WTC11 (cell line): ENCODE measurements at regions of chr9 and their contacts with region 1.

Region 1: DNA sequence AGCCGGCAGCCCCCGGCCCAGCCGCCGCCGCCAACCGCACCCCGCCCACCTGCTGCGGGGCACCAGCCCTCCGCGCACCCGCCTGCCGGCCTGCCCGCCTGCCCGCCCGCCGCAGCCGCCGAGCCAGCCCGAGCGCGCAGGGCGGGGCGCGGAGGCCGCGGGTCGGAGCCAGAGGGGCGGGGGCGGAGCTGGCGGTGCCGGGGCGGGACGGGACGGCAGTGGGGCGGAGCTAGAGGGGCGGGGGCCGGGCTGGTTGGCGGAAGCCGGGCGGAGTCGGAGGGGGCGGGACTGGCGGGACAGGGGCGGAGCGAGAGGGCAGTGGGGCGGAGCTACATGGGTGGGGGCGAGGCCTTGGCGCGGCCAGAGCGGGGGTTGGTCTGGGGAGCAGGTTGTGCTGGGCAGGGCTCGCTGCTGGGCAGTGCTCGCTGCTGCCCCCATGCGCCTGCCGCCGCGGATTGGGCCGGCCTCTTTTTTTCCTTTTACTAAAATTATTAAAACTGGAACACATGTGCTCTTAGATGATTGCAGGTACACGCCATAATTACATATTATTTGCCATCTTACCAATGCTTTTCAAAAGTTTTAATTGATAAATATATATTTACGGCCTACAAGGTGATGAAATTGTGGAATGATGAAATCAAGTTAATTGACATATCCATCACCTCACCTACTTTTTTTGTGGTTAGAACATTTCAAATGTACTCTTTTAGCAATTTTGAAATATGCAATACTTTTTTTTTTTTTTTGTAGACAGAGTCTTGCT is at the start of gene SH3GLB2:
- DNase-seq: peak; percentile 96
- ATAC-seq: peak; percentile 94
- H3K4me3 Mint-ChIP-seq: peak within 1 kb of the TSS; percentile 83
- H3K27ac Mint-ChIP-seq: peak within 1 kb of the TSS; percentile 84
- H3K4me1 Mint-ChIP-seq: peaks cover 23% of the 10 kb centered on the region
- H3K27me3 Mint-ChIP-seq: no peaks in the 10 kb centered on the region
- CTCF ChIP-seq: peak; percentile 52
- total RNA-seq, gene SH3GLB2: 59.7 to 65.7 TPM (median 62.9 TPM) in 3 replicates

Region 2: DNA sequence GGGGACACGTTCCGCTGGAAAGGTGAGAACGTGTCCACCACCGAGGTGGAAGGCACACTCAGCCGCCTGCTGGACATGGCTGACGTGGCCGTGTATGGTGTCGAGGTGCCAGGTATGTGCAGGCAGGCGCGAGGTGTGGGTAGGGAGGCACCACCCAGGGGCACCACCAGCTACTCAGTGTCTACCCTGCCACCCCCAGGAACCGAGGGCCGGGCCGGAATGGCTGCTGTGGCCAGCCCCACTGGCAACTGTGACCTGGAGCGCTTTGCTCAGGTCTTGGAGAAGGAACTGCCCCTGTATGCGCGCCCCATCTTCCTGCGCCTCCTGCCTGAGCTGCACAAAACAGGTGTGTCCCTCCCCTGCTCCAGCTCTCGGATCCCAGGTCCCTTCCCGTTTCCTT is 672.9 kb before region 1 on chr9:
- CTCF ChIA-PET with region 1: no interaction called
- POLR2A ChIA-PET with region 1: no interaction called
- DNase-seq: no peak
- ATAC-seq: no peak
- H3K4me3 Mint-ChIP-seq: no peak overlapping the region
- H3K27ac Mint-ChIP-seq: no peak overlapping the region
- H3K4me1 Mint-ChIP-seq: no peaks in the 10 kb centered on the region
- H3K27me3 Mint-ChIP-seq: no peaks in the 10 kb centered on the region
- CTCF ChIP-seq: no peak

Region 3: GRCh38 chr9:128818099-128818838 is 210.1 kb before region 1 on chr9 and contains the start of gene ENDOG:
- CTCF ChIA-PET with region 1: interaction called, 13 read pairs
- POLR2A ChIA-PET with region 1: interaction called, 3 read pairs
- DNase-seq: peak; percentile 99
- ATAC-seq: peak; percentile 86
- H3K4me3 Mint-ChIP-seq: peak within 1 kb of the TSS; percentile 71
- H3K27ac Mint-ChIP-seq: peak within 1 kb of the TSS; percentile 80; the same call in 1 of the 2 replicates
- H3K4me1 Mint-ChIP-seq: peaks cover 3% of the 10 kb centered on the region
- H3K27me3 Mint-ChIP-seq: no peaks in the 10 kb centered on the region
- CTCF ChIP-seq: peak; percentile 53; the same call in 1 of the 2 replicates
- total RNA-seq, gene ENDOG: 25.8 to 28.7 TPM (median 25.8 TPM) in 3 replicates

Region 4: DNA sequence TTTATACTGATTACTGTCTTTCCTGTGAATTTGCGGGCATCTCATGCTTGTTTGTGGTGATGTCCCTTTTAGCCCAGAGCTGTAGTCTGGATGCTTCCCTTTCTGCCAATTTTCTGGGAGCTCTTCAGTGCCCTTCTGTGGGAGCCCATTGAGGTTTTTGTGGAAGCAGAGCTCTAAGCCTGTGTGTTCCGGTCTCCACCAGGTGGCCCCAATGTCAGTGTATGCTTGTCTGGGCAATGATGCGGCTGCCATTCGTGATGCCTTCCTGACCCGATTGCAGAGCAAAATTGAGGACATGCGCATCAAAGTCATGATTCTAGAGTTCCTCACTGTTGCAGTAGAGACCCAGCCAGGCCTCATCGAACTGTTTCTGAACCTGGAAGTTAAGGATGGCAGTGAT is 35.4 kb before region 1 on chr9:
- CTCF ChIA-PET with region 1: interaction called, 10 read pairs
- POLR2A ChIA-PET with region 1: no interaction called
- DNase-seq: peak; percentile 48
- ATAC-seq: peak; percentile 78
- H3K4me3 Mint-ChIP-seq: no peak overlapping the region
- H3K27ac Mint-ChIP-seq: no peak overlapping the region
- H3K4me1 Mint-ChIP-seq: no peaks in the 10 kb centered on the region
- H3K27me3 Mint-ChIP-seq: no peaks in the 10 kb centered on the region
- CTCF ChIP-seq: no peak

Region 5: DNA sequence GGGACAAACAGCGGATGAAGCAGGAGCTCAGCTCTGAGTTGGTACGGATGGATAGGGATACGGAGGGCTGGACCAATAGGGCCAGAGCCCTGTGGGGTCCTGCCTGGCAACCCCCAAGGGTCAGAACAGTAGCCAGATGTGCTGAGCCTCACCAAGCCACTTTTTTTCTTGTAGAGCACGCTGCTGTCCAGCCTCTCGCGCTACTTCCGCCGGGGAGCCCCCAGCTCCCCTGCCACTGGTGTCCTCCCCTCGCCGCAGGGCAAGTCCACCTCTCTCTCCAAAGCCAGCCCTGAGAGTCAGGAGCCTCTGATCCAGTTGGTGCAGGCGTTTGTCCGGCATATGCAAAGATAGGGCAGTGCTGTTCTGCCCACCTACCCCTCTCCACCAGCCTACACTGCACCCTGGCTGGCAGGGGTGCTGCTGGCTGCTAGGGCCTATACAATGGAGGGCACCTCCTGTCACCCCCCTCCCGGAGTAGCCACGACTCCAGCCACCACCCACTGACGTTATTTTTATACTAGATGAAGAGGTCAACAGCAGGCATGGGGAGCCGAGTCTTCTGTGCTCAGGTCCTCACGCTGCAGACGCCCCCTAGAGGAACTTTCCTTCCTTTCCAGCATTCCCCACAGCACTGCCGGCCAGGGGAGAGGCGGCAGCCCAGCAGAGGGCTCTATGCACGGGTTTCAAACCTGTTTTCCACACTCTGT is 21.9 kb before region 1 on chr9:
- CTCF ChIA-PET with region 1: interaction called, 11 read pairs
- POLR2A ChIA-PET with region 1: interaction called, 5 read pairs
- DNase-seq: peak; percentile 80
- ATAC-seq: peak; percentile 86
- H3K4me3 Mint-ChIP-seq: no peak overlapping the region
- H3K27ac Mint-ChIP-seq: peak overlapping the region; percentile 82; the same call in 1 of the 2 replicates
- H3K4me1 Mint-ChIP-seq: 0 out of 2 replicates have a peak, but pooled peaks cover 2% of the 10 kb centered on the region
- H3K27me3 Mint-ChIP-seq: no peaks in the 10 kb centered on the region
- CTCF ChIP-seq: peak; percentile 74

Region 6: DNA sequence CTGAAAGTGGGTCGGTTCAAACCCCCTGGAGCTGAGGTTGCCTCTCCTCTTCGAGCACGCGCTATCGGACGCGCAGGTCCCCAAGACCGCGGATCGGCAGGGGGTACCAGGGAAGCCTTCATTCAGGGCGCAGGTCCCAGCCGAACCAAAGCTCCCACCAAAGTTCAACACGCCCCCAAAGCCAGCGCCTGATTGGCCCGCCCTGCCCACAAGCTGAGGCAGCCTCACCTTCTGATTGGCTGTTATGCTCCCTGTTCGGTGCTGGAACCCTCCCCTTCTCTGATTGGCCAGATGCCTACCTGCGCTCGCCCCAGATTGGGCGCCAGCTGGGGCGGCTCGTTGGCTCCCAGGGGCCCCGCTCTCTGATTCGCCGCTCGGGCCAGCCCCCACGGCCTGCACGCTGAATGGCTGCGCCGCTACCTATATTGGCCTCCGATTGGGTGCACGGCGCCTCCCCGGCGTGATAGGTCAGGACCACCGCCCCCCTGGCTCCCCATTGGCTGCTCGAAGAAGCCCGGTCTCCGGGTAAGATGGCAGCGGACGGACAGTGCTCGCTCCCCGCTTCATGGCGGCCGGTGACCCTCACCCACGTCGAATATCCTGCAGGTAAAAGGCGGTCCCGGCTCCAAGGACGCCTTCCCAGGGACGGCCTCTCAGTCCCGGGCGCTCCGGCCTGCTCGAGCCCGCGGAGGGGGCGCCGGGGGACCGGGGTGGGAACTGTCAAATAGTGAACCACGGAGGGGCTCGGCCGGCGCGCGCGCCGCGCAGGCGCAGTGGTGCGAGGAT is 52.4 kb after region 1 on chr9 and contains the start of gene DOLPP1:
- CTCF ChIA-PET with region 1: interaction called, 28 read pairs
- POLR2A ChIA-PET with region 1: no interaction called
- DNase-seq: peak; percentile 99
- ATAC-seq: peak; percentile 95
- H3K4me3 Mint-ChIP-seq: peak within 1 kb of the TSS; percentile 92
- H3K27ac Mint-ChIP-seq: peak within 1 kb of the TSS; percentile 84
- H3K4me1 Mint-ChIP-seq: peaks cover 8% of the 10 kb centered on the region
- H3K27me3 Mint-ChIP-seq: no peaks in the 10 kb centered on the region
- CTCF ChIP-seq: no peak
- total RNA-seq, gene DOLPP1: 30.4 to 35.6 TPM (median 32.7 TPM) in 3 replicates

Region 7: DNA sequence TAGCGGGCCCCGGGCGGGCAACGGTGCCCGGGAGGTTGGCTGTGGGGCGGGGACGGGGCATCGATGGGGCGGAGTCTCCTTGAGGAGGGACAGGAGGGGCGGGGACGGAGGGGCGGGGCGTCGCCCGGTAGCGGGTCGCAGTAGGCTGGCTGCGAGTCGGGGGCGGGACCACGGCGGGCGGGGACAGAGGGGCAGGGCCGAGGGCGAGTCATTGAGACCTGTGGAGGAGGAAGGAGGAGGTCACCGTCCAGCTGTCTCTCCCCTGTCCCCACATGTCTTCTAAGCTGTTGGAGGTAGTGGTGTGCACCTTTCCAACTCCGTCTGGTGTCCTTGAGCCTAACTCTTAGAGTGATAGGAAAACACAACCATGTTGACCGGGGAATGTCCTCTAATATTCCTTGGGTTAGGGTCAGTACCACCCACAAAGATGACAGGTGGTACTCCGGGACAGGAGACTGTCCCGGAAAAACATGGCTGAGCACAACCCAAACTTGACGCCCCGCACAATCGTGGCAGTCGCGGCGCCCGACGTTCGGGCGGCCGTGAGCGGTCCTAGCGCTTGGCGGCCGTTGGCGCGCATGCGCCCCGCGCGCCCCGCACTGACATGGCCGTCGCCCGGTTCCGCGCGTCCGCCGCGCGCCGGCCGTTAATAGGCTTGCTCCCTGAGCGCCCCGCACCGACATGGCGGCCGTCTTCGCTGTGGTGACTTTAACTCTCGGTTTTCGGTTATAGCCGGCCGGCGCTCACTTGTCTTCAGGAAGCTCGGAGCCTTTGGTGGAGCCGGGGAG is 82.6 kb after region 1 on chr9 and contains the starts of genes CRAT and PTPA:
- CTCF ChIA-PET with region 1: interaction called, 13 read pairs
- POLR2A ChIA-PET with region 1: no interaction called
- DNase-seq: peak; percentile 97
- ATAC-seq: peak; percentile 85
- H3K4me3 Mint-ChIP-seq: peak within 1 kb of the TSS; percentile 93
- H3K27ac Mint-ChIP-seq: peak within 1 kb of the TSS; percentile 99
- H3K4me1 Mint-ChIP-seq: peaks cover 24% of the 10 kb centered on the region
- H3K27me3 Mint-ChIP-seq: peaks cover 17% of the 10 kb centered on the region
- CTCF ChIP-seq: no peak
- total RNA-seq, gene CRAT: 17.2 to 19.1 TPM (median 17.5 TPM) in 3 replicates
- total RNA-seq, gene PTPA: 181 to 186 TPM (median 186 TPM) in 3 replicates